ENCODE measurements at regions of chr9 and their contacts with region 1.

Region 1: DNA sequence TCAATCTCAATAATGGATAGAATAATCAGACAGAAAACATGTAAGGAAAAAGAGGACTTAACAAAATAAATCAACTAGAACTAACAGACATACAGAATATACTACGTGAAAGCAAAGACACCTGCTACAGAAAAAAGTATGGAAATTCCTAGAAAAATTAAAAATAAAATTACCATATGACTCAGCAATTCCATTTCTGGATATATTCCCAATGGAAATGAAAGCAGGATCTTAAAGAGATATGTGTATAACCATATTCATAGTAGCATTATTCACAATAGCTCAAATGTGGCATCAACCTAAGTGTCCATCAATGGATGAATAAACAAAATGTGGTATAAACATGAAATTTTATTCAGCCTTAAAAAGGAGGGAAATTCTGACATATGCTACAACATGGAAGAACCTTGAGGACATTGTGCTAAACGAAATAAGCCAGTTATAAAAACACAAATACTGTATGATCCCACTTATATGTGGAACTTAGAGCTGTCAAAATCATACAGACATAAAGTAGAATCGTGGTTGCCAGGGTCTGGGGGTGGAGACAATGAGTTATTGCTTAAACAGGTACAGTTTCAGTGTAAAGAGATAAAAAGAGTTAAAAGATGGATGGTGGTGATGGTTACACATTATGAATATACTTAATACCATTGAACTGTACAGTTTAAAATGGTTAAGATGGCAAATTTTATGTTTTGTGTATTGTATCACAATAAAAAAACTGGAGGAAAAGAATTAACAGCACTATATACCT is 6.9 kb downstream of the PLAA start:
- DNase-seq: no peak
- ATAC-seq: peak in 1 of 4 donors; percentile 46
- H3K4me3 ChIP-seq: peak overlapping the region; percentile 11
- H3K27ac ChIP-seq: peak overlapping the region; percentile 21
- H3K4me1 ChIP-seq: peaks cover 24% of the 10 kb centered on the region
- H3K27me3 ChIP-seq: no peaks in the 10 kb centered on the region
- CTCF ChIP-seq: no peak

Region 2: DNA sequence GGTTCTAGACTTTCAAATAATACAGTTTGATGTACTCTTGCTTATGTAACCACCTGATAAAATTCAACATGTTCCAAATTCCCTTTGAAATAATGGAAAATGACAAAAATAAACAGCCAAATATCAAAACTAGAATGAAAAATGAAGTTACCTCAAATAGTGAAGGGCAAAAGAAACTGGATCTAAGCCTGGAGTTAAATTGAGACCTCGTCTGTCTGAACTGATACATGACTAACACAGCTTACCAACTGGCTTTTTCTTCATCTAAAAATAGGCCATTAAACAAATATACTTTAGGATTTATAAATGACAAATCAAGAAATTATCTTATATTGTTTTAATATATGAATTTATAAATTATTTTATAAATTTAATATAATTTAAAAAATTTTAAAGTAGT is 35.5 kb before region 1 on chr9:
- intact Hi-C with region 1: loop called in 1 of 2 experiments (anchors 5 kb)
- DNase-seq: no peak
- ATAC-seq: peak in 3 of 4 donors; percentile 54 to 82 (median 70)
- H3K4me3 ChIP-seq: no peak overlapping the region
- H3K27ac ChIP-seq: no peak overlapping the region
- H3K4me1 ChIP-seq: no peaks in the 10 kb centered on the region
- H3K27me3 ChIP-seq: no peaks in the 10 kb centered on the region
- CTCF ChIP-seq: no peak